MCF 10A (cell line): ENCODE measurements at regions of chr3 and their contacts with region 1.

Region 1: GRCh38 chr3:106573606-106574005 is 704.8 kb upstream of the CBLB start:
- DNase-seq: peak; percentile 14
- H3K4me3 Mint-ChIP-seq: no peak overlapping the region
- H3K27ac Mint-ChIP-seq: no peak overlapping the region
- H3K4me1 Mint-ChIP-seq: no peaks in the 10 kb centered on the region
- H3K27me3 Mint-ChIP-seq: no peaks in the 10 kb centered on the region
- CTCF ChIP-seq: no peak

Region 2: GRCh38 chr3:106560451-106560966 is 13.1 kb before region 1 on chr3:
- CTCF ChIA-PET with region 1: interaction called, 6 read pairs
- POLR2A ChIA-PET with region 1: interaction called, 15 read pairs
- intact Hi-C with region 1: no loop called
- DNase-seq: peak; percentile 79
- H3K4me3 Mint-ChIP-seq: peak overlapping the region; percentile 10
- H3K27ac Mint-ChIP-seq: peak overlapping the region; percentile 95
- H3K4me1 Mint-ChIP-seq: peaks cover 17% of the 10 kb centered on the region
- H3K27me3 Mint-ChIP-seq: no peaks in the 10 kb centered on the region
- CTCF ChIP-seq: no peak

Region 3: GRCh38 chr3:106585871-106586270 is 12.3 kb after region 1 on chr3:
- CTCF ChIA-PET with region 1: no interaction called
- POLR2A ChIA-PET with region 1: interaction called, 18 read pairs
- intact Hi-C with region 1: no loop called
- DNase-seq: no peak
- H3K4me3 Mint-ChIP-seq: no peak overlapping the region
- H3K27ac Mint-ChIP-seq: no peak overlapping the region
- H3K4me1 Mint-ChIP-seq: peaks cover 21% of the 10 kb centered on the region
- H3K27me3 Mint-ChIP-seq: no peaks in the 10 kb centered on the region
- CTCF ChIP-seq: no peak